ENCODE measurements at regions of chr12 and their contacts with region 1.

Region 1: GRCh38 chr12:55194382-55194781 is 26.4 kb upstream of the OR10A7 start:
- DNase-seq: no peak
- H3K4me3 ChIP-seq: no peak overlapping the region
- H3K27ac ChIP-seq: no peak overlapping the region
- H3K4me1 ChIP-seq: no peaks in the 10 kb centered on the region
- H3K27me3 ChIP-seq: no peaks in the 10 kb centered on the region
- CTCF ChIP-seq: no peak
- POLR2A ChIP-seq: no peak

Region 2: DNA sequence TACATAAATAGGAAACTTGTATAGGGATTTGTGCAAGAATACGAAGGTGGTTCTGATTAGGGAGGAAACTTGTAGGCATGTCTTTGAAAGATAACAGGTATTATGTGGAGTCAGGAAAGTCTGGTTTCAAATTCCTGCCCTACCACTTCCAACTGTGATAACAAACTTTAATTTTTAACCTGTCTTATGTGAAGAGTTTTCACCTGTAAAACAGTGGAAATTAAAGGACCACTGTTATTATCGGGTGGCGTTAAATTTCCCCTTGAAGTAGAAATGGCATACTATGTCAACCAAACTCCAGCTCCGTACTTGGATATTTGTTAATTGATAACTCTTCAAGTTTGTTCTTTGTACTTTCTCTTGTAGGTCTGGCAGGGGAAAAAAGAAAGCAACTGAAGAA is 125.8 kb after region 1 on chr12:
- intact Hi-C with region 1: no loop called
- DNase-seq: no peak
- H3K4me3 ChIP-seq: no peak overlapping the region
- H3K27ac ChIP-seq: no peak overlapping the region
- H3K4me1 ChIP-seq: no peaks in the 10 kb centered on the region
- H3K27me3 ChIP-seq: no peaks in the 10 kb centered on the region
- CTCF ChIP-seq: no peak
- POLR2A ChIP-seq: no peak

Region 3: GRCh38 chr12:55619354-55620138 is 425.2 kb after region 1 on chr12:
- intact Hi-C with region 1: loop called (anchors 10 kb)
- DNase-seq: peak; percentile 63
- H3K4me3 ChIP-seq: no peak overlapping the region
- H3K27ac ChIP-seq: no peak overlapping the region
- H3K4me1 ChIP-seq: no peaks in the 10 kb centered on the region
- H3K27me3 ChIP-seq: no peaks in the 10 kb centered on the region
- CTCF ChIP-seq: peak; percentile 90 to 93 (median 90)
- POLR2A ChIP-seq: no peak

Measured in testis (tissue), 5 donors.